PC-3 (cell line): ENCODE measurements at regions of chr4 and their contacts with region 1.

Region 1: GRCh38 chr4:145936142-145936996 is 2.3 kb downstream of the ZNF827 start:
- DNase-seq: peak; percentile 75
- ATAC-seq: peak; percentile 37
- H3K4me3 ChIP-seq: peak overlapping the region; percentile 84
- H3K27ac ChIP-seq: peak overlapping the region; percentile 75
- H3K4me1 ChIP-seq: peaks cover 31% of the 10 kb centered on the region
- H3K27me3 ChIP-seq: no peaks in the 10 kb centered on the region
- CTCF ChIP-seq: peak; percentile 47; the same call in 1 of the 2 replicates

Region 2: GRCh38 chr4:145180298-145181090 is 755.9 kb before region 1 on chr4 and contains the start of gene OTUD4:
- CTCF ChIA-PET with region 1: no interaction called
- POLR2A ChIA-PET with region 1: no interaction called
- intact Hi-C with region 1: loop called (anchors 5 kb)
- DNase-seq: peak; percentile 96
- ATAC-seq: peak; percentile 79
- H3K4me3 ChIP-seq: peak within 1 kb of the TSS; percentile 87
- H3K27ac ChIP-seq: peak within 1 kb of the TSS; percentile 78
- H3K4me1 ChIP-seq: peaks cover 21% of the 10 kb centered on the region
- H3K27me3 ChIP-seq: no peaks in the 10 kb centered on the region
- CTCF ChIP-seq: no peak; the same call in 1 of the 2 replicates
- total RNA-seq, gene OTUD4: 13.6 and 20.6 TPM in 2 replicates

Region 3: GRCh38 chr4:145732895-145733880 is 203.2 kb before region 1 on chr4:
- CTCF ChIA-PET with region 1: no interaction called
- POLR2A ChIA-PET with region 1: interaction called, 3 read pairs
- intact Hi-C with region 1: loop called (anchors 1 kb)
- DNase-seq: peak; percentile 95
- ATAC-seq: peak; percentile 65
- H3K4me3 ChIP-seq: peak overlapping the region; percentile 68
- H3K27ac ChIP-seq: peak overlapping the region; percentile 94
- H3K4me1 ChIP-seq: peaks cover 51% of the 10 kb centered on the region
- H3K27me3 ChIP-seq: no peaks in the 10 kb centered on the region
- CTCF ChIP-seq: no peak

Region 4: GRCh38 chr4:145808021-145808650 is 128.2 kb before region 1 on chr4:
- CTCF ChIA-PET with region 1: no interaction called
- POLR2A ChIA-PET with region 1: no interaction called
- intact Hi-C with region 1: loop called (anchors 2 kb)
- DNase-seq: peak; percentile 98
- ATAC-seq: peak; percentile 68
- H3K4me3 ChIP-seq: peak overlapping the region; percentile 30; the same call in 1 of the 2 replicates
- H3K27ac ChIP-seq: peak overlapping the region; percentile 92
- H3K4me1 ChIP-seq: peaks cover 48% of the 10 kb centered on the region
- H3K27me3 ChIP-seq: no peaks in the 10 kb centered on the region
- CTCF ChIP-seq: no peak

Region 5: GRCh38 chr4:146175541-146176453 is 239.4 kb after region 1 on chr4 and contains the start of gene LSM6:
- CTCF ChIA-PET with region 1: no interaction called
- POLR2A ChIA-PET with region 1: no interaction called
- intact Hi-C with region 1: loop called (anchors 5 kb)
- DNase-seq: peak; percentile 87
- ATAC-seq: peak; percentile 83
- H3K4me3 ChIP-seq: peak within 1 kb of the TSS; percentile 84
- H3K27ac ChIP-seq: peak within 1 kb of the TSS; percentile 42
- H3K4me1 ChIP-seq: peaks cover 14% of the 10 kb centered on the region
- H3K27me3 ChIP-seq: no peaks in the 10 kb centered on the region
- CTCF ChIP-seq: no peak
- total RNA-seq, gene LSM6: 62.8 and 76.3 TPM in 2 replicates